ENCODE measurements at regions of chr1 and their contacts with region 1.

Region 1: DNA sequence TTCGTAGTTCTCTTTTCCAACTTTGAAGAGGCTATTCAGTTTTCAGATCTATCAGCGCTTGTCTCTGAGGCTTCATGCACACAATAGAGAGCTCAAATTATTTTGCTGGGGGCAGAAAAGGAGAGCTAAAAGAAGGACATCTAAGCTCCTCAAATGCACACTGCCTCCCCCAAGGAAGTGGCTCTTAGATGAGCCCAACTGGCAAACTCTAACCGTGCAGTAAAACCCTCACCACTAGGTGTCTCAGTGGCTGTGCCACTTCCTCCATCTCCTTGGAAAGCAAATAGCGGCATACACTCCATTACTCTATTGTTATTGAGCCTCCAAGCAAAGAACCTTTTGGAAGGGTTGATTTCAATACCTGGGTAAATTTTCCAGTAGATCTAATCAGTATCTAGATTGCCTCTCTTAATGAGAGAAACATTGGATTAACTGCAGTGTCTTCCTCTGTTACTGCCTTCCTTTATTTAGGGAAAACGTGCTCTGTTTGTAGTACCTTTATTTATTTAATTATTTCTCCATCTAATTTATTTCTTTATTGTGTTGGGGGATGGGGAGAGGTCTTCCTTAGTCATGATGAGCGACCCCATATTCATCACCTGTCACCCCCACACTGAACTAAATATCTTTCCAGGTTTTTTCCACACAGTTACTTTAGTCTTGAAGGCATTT is 9.2 kb upstream of the SFPQ start:
- DNase-seq: peak; percentile 80
- ATAC-seq: peak; percentile 100
- H3K4me3 Mint-ChIP-seq: no peak overlapping the region
- H3K27ac Mint-ChIP-seq: no peak overlapping the region
- H3K4me1 Mint-ChIP-seq: peaks cover 5% of the 10 kb centered on the region
- H3K27me3 Mint-ChIP-seq: no peaks in the 10 kb centered on the region

Region 2: DNA sequence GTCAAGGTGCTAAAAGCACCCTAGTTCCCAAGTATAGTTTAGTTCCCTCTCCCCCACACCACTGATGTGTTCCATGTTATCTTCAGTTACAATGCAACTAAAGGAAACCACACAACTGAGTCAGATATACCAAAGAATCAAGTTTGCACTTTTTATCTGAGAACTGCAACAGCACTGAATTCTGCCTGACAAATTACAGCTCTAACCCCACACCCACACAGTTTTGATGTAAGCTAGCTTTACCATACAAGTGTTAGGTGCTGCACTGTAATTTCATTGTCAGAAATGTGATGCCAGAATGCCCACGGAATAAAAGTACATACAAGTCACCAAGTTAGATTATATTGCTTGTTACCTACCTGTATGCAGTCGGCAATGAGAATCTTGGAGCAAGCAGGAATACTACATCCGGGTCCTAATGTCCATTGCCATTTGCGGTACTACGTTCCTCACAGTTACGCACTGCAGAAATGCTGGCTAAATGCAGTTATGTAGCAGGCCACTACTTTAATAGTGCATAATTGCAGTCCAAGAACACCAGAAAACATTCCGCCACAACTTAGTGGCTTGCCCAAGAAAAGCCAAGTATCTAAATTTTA is 21.3 kb before region 1 on chr1:
- CTCF ChIA-PET with region 1: interaction called, 4 read pairs
- POLR2A ChIA-PET with region 1: interaction called, 12 read pairs
- intact Hi-C with region 1: no loop called
- DNase-seq: peak; percentile 36
- ATAC-seq: peak; percentile 84
- H3K4me3 Mint-ChIP-seq: peak overlapping the region; percentile 7
- H3K27ac Mint-ChIP-seq: peak overlapping the region; percentile 68
- H3K4me1 Mint-ChIP-seq: peaks cover 76% of the 10 kb centered on the region
- H3K27me3 Mint-ChIP-seq: no peaks in the 10 kb centered on the region

Region 3: GRCh38 chr1:35298464-35298863 is 96.3 kb after region 1 on chr1:
- CTCF ChIA-PET with region 1: interaction called, 5 read pairs
- POLR2A ChIA-PET with region 1: interaction called, 3 read pairs
- intact Hi-C with region 1: loop called (anchors 1 kb)
- DNase-seq: peak; percentile 25
- ATAC-seq: peak; percentile 81
- H3K4me3 Mint-ChIP-seq: no peak overlapping the region
- H3K27ac Mint-ChIP-seq: no peak overlapping the region
- H3K4me1 Mint-ChIP-seq: peaks cover 9% of the 10 kb centered on the region
- H3K27me3 Mint-ChIP-seq: no peaks in the 10 kb centered on the region

Region 4: DNA sequence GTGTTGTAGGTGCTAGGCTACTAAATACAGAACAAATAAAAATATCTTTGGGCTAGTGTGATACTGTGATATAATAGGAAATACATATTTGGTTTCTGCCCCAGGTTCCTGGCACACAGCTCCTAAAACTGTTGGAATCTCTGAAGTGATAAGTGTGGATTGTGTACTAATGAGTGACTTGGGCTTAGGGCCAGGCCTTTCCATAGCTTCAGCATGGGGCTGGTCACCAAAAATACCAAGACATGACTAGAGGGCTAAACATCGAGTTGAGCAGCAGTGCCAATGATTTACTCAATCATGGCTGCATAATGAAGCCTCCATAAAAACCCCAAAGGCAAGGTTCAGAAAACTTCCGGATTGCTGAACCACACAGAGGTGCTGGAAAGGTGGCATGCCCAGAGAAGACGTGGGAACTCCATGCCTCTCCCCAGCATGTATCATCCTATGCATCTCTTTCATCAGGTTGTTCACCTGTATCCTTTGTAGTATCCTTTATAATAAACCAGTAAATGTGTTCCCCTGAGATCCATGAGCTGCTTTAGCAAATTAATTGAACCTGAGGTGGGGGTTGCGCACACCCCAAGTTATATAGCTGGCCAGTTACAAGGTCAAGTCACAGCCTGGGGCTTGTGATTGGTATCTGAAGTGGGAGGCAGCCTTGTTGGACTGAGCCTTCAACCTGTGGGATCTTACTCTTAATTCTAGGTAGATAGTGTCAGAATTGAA is 118.0 kb after region 1 on chr1:
- CTCF ChIA-PET with region 1: no interaction called
- POLR2A ChIA-PET with region 1: no interaction called
- intact Hi-C with region 1: no loop called
- DNase-seq: no peak
- ATAC-seq: no peak
- H3K4me3 Mint-ChIP-seq: no peak overlapping the region
- H3K27ac Mint-ChIP-seq: no peak overlapping the region
- H3K4me1 Mint-ChIP-seq: peaks cover 17% of the 10 kb centered on the region
- H3K27me3 Mint-ChIP-seq: no peaks in the 10 kb centered on the region

Region 5: DNA sequence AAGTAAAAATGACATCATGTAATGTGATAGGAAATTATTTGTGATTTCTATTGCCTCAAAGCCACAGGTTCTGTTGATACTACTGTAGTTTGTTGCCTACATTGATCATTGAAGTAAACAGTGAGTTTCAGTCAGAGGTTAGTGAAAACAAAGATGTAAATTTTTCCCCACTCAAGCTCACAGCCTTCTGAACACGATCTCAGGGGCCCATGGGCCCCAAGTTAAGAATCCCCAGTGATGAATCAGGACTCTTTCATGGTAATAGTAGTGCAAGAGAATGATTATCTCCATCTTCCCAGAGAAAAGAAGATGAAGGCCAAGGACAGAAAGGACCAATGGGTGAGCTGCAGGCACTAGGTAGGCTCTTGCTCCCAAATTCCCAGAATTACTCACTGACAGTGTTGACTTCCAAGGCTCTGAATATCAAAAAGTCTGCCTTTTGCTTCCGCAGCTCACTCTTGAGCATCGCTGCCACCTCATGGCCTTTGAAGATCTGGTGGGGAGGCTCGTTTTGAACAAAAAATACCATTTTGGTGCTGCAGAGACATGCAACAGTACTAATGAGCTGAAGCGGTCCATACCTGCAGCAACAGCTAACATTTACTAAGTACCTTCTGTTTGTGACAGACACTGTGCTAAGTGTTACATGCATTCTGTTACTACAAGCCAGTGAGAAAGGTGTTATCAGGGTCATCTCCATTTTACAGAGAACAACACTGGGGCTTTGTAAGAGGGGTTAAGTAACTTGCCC is 241.8 kb after region 1 on chr1:
- CTCF ChIA-PET with region 1: interaction called, 4 read pairs
- POLR2A ChIA-PET with region 1: no interaction called
- intact Hi-C with region 1: loop called in 1 of 2 experiments (anchors 5 kb)
- DNase-seq: peak; percentile 34
- ATAC-seq: peak; percentile 30
- H3K4me3 Mint-ChIP-seq: no peak overlapping the region
- H3K27ac Mint-ChIP-seq: peak overlapping the region; percentile 55
- H3K4me1 Mint-ChIP-seq: peaks cover 22% of the 10 kb centered on the region
- H3K27me3 Mint-ChIP-seq: no peaks in the 10 kb centered on the region

Region 6: DNA sequence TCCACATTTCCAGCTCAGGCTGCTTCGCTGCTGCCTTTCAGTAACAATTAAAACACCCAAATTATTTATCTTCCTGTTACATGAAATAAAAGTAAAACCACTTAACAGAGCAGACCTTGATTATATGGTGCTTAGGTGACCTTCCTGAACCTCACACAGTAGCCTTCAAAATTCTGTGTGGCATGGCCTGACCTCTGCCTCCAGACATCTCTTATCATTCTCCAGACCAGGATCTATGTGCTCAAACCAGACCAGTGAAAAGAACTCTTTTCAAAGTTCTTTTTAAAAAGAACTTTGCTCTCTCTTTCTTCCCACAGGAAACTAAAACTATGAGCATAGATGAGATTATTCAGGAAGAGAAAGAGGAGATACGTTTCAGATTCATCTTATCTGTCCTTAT is 317.2 kb after region 1 on chr1:
- CTCF ChIA-PET with region 1: no interaction called
- POLR2A ChIA-PET with region 1: no interaction called
- intact Hi-C with region 1: no loop called
- DNase-seq: no peak
- ATAC-seq: no peak
- H3K4me3 Mint-ChIP-seq: no peak overlapping the region
- H3K27ac Mint-ChIP-seq: peak overlapping the region; percentile 32
- H3K4me1 Mint-ChIP-seq: peaks cover 32% of the 10 kb centered on the region
- H3K27me3 Mint-ChIP-seq: no peaks in the 10 kb centered on the region

Measured in activated CD4-positive, alpha-beta T cell treated with anti-CD3 and anti-CD28 coated beads for 36 hours (primary cell).